Activated CD4-positive, alpha-beta T cell treated with anti-CD3 and anti-CD28 coated beads for 36 hours (primary cell): ENCODE measurements at regions of chr7 and their contacts with region 1.

Region 1: DNA sequence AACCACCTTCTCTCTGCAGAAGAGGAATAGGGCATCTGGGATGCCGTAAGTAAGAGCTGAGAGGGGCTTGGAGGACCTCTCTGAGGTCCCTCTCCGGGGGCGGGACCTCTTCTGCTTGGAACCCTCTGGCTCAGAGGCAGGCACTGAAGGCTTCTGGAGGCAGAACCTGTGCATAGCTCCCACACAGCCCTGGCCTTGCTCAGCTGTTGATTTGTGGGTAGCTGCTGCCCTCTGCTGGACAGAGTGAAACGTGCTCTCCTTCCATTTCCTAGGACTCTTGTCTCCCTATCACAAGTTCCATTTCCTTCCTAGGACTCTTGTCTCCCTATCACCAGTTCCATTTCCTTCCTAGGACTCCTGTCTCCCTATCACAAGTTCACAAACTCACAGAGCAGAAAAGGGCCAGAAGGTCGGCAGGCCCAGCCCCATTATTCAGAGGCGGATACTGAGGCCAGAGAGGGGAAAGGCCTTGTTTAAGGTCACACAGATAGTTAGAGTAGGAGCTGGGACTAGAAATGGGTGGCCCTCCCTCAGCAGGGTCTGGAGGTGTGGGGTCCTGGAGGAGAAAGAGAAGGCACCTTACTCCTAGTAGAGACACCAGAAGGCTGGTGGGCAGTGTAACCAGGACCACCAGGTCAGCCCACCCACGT is 30.3 kb upstream of the GARS1 start:
- DNase-seq: peak; percentile 87
- ATAC-seq: peak; percentile 99
- H3K4me3 Mint-ChIP-seq: no peak overlapping the region
- H3K27ac Mint-ChIP-seq: no peak overlapping the region
- H3K4me1 Mint-ChIP-seq: no peaks in the 10 kb centered on the region
- H3K27me3 Mint-ChIP-seq: no peaks in the 10 kb centered on the region

Region 2: DNA sequence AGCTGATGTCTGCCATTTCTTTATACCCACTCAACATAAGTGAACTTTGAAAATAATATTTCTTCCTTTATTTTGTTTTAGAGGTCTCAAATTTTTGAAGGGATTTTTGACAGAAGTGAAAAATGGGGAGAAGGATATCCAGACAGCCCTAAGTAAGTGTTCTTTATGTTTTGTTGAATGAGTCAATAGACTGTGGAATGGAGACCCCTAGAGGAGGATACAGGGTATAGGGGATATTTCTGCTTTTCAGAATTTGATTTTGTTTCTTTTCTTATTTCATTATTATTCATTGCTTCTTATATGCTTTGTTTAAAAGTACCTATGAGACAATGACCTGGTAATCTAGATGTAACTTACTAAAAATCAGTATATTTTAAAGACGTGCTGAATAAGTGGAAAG is 501.8 kb before region 1 on chr7:
- CTCF ChIA-PET with region 1: no interaction called
- POLR2A ChIA-PET with region 1: no interaction called
- intact Hi-C with region 1: no loop called
- DNase-seq: no peak
- ATAC-seq: peak; percentile 53
- H3K4me3 Mint-ChIP-seq: no peak overlapping the region
- H3K27ac Mint-ChIP-seq: no peak overlapping the region
- H3K4me1 Mint-ChIP-seq: peaks cover 5% of the 10 kb centered on the region
- H3K27me3 Mint-ChIP-seq: no peaks in the 10 kb centered on the region

Region 3: GRCh38 chr7:30164567-30164966 is 399.8 kb before region 1 on chr7:
- CTCF ChIA-PET with region 1: no interaction called
- POLR2A ChIA-PET with region 1: no interaction called
- intact Hi-C with region 1: loop called (anchors 1 to 5 kb)
- DNase-seq: no peak
- ATAC-seq: peak; percentile 24
- H3K4me3 Mint-ChIP-seq: no peak overlapping the region
- H3K27ac Mint-ChIP-seq: peak overlapping the region; percentile 17
- H3K4me1 Mint-ChIP-seq: peaks cover 38% of the 10 kb centered on the region
- H3K27me3 Mint-ChIP-seq: no peaks in the 10 kb centered on the region

Region 4: DNA sequence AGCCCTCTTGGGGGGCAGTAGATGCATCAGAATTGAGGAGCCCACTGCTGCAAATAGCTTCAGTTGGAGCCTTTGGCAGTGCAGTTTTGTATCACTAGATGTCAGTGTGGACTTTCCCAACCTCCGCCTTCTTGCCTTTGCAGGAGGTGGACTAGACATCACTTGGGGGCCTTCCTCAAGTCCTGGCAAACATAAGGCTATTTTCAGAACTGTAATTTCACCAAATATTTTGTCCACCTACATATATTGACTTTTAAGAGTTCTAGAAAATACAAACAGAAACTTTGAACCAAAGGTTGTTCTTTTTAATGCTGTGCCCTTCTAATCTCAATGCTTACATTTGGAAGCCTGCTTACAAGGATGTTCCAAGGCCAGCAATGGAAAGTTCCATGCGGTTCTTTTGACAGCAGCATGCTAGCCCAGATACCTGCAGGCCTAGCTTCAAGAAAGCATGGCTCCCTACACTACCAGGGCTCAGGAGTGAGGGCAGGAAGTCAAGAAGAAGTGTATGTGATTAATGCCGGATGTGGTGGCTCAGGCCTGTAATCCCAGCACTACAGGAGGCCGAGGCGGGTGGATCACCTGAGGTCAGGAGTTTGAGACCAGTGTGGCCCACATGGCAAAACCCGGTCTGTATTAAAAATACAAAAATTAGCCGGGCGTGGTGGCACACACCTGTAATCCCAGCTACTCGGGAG is 288.0 kb before region 1 on chr7:
- CTCF ChIA-PET with region 1: interaction called, 36 read pairs
- POLR2A ChIA-PET with region 1: no interaction called
- intact Hi-C with region 1: loop called (anchors 1 kb)
- DNase-seq: peak; percentile 69
- ATAC-seq: peak; percentile 87
- H3K4me3 Mint-ChIP-seq: no peak overlapping the region
- H3K27ac Mint-ChIP-seq: no peak overlapping the region
- H3K4me1 Mint-ChIP-seq: peaks cover 6% of the 10 kb centered on the region
- H3K27me3 Mint-ChIP-seq: no peaks in the 10 kb centered on the region

Region 5: GRCh38 chr7:30348083-30348560 is 216.2 kb before region 1 on chr7:
- CTCF ChIA-PET with region 1: interaction called, 4 read pairs
- POLR2A ChIA-PET with region 1: no interaction called
- intact Hi-C with region 1: loop called in 1 of 2 experiments (anchors 5 kb)
- DNase-seq: peak; percentile 59
- ATAC-seq: peak; percentile 91
- H3K4me3 Mint-ChIP-seq: peak overlapping the region; percentile 69
- H3K27ac Mint-ChIP-seq: peak overlapping the region; percentile 88
- H3K4me1 Mint-ChIP-seq: peaks cover 54% of the 10 kb centered on the region
- H3K27me3 Mint-ChIP-seq: no peaks in the 10 kb centered on the region

Region 6: GRCh38 chr7:30510124-30511075 is 54.0 kb before region 1 on chr7:
- CTCF ChIA-PET with region 1: interaction called, 17 read pairs
- POLR2A ChIA-PET with region 1: no interaction called
- intact Hi-C with region 1: loop called (anchors 1 kb)
- DNase-seq: peak; percentile 59
- ATAC-seq: peak; percentile 59
- H3K4me3 Mint-ChIP-seq: no peak overlapping the region
- H3K27ac Mint-ChIP-seq: no peak overlapping the region
- H3K4me1 Mint-ChIP-seq: peaks cover 6% of the 10 kb centered on the region
- H3K27me3 Mint-ChIP-seq: no peaks in the 10 kb centered on the region

Region 7: GRCh38 chr7:30515761-30516160 is 48.6 kb before region 1 on chr7:
- CTCF ChIA-PET with region 1: interaction called, 17 read pairs
- POLR2A ChIA-PET with region 1: no interaction called
- intact Hi-C with region 1: loop called (anchors 1 kb)
- DNase-seq: no peak
- ATAC-seq: no peak
- H3K4me3 Mint-ChIP-seq: no peak overlapping the region
- H3K27ac Mint-ChIP-seq: no peak overlapping the region
- H3K4me1 Mint-ChIP-seq: peaks cover 12% of the 10 kb centered on the region
- H3K27me3 Mint-ChIP-seq: no peaks in the 10 kb centered on the region

Region 8: GRCh38 chr7:30548762-30549344 is 15.5 kb before region 1 on chr7:
- CTCF ChIA-PET with region 1: interaction called, 64 read pairs
- POLR2A ChIA-PET with region 1: no interaction called
- intact Hi-C with region 1: loop called in 1 of 2 experiments (anchors 1 kb)
- DNase-seq: peak; percentile 62
- ATAC-seq: peak; percentile 75
- H3K4me3 Mint-ChIP-seq: no peak overlapping the region
- H3K27ac Mint-ChIP-seq: no peak overlapping the region
- H3K4me1 Mint-ChIP-seq: peaks cover 12% of the 10 kb centered on the region
- H3K27me3 Mint-ChIP-seq: no peaks in the 10 kb centered on the region

Region 9: DNA sequence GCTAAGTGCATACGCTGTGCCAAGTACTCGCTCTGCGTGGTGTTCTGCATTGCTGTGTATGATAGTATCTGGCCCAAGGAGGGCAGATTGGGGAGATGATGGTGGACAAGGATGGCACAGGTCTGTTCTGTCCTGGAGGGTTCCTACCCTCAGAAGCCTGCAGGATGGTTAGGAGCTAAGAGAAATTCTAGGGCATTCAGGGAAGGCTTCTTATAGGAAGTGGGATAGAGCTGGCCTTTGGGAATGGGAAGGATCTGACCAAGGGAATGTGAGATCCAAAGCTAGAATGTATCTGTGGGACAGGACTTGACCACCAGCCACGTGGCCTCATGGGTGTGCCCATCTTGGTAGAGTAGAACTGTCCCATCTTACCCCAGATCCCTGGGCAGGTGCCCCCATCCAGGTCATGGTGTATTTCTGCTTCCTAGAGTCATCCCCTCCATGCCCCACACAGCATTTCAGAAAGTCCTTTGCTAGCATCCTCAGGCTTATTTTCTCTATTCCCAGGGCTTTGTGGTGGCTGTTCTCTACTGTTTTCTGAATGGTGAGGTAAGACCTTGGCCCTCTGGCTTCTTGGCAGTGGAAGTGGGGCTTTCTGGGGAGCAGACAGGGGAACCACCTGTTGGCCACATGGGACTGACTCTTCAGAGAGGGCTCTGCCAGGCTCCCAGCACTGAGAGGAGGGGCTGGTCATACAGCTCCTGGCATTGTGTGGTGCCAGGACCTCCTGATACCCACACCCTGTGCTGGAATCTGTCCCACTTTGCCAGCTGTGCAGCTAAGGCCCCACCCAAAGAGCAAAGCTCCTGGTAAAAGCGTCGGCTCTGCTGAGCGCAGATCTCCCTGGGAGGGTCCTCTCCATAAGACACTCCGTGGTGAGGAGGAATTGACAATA is 540.2 kb after region 1 on chr7:
- CTCF ChIA-PET with region 1: no interaction called
- POLR2A ChIA-PET with region 1: no interaction called
- intact Hi-C with region 1: no loop called
- DNase-seq: no peak
- ATAC-seq: no peak
- H3K4me3 Mint-ChIP-seq: no peak overlapping the region
- H3K27ac Mint-ChIP-seq: no peak overlapping the region
- H3K4me1 Mint-ChIP-seq: no peaks in the 10 kb centered on the region
- H3K27me3 Mint-ChIP-seq: peaks cover 2% of the 10 kb centered on the region